ENCODE measurements at regions of chr7 and their contacts with region 1.

Region 1: GRCh38 chr7:24979863-24980533 is at the start of gene OSBPL3:
- DNase-seq: peak; percentile 97
- H3K4me3 ChIP-seq: peak within 1 kb of the TSS; percentile 95
- H3K27ac ChIP-seq: peak within 1 kb of the TSS; percentile 94
- H3K4me1 ChIP-seq: peaks cover 41% of the 10 kb centered on the region
- H3K27me3 ChIP-seq: no peaks in the 10 kb centered on the region
- total RNA-seq, gene OSBPL3: 25.8 and 28.2 TPM in 2 replicates

Region 2: DNA sequence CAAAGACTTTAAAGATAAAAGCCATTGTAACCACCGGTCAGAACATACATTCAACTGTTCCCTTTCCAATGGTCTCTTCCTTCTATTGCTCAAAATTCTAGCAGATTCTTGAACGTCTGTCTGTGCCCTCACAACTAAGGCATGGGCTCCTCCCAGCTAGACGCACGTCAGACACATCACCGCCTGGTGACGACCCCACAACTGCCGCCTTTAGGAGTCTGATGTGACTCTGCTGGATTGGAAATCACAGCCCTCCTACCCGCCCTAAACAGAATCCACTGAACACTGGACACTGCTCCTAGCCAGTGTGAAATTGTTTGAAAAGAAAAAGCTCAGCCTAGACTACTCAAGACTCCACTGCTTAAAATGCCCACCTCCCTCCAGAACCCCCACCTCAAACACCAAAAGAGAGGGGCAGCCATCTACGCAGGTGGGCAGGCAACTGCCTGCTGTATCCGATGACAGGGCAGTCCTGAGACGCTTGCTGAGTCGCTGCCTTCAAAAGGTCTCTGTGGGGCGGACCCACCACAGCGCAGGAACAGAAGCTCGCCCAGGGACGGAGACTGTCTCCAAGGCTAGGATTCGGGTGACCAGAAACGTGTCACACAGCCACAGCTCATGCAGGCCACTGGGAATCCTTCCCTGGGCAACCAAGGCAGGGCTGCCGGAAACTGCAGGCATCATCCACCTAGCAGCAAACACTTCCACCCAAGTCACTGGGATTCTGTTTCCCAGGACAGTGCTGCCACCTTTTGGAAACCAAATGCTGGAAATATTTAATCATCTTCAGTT is 257.4 kb before region 1 on chr7:
- in situ Hi-C with region 1: no loop called
- DNase-seq: peak; percentile 49
- H3K4me3 ChIP-seq: no peak overlapping the region
- H3K27ac ChIP-seq: no peak overlapping the region
- H3K4me1 ChIP-seq: peaks cover 4% of the 10 kb centered on the region; the same call in 1 of the 2 replicates
- H3K27me3 ChIP-seq: no peaks in the 10 kb centered on the region

Region 3: DNA sequence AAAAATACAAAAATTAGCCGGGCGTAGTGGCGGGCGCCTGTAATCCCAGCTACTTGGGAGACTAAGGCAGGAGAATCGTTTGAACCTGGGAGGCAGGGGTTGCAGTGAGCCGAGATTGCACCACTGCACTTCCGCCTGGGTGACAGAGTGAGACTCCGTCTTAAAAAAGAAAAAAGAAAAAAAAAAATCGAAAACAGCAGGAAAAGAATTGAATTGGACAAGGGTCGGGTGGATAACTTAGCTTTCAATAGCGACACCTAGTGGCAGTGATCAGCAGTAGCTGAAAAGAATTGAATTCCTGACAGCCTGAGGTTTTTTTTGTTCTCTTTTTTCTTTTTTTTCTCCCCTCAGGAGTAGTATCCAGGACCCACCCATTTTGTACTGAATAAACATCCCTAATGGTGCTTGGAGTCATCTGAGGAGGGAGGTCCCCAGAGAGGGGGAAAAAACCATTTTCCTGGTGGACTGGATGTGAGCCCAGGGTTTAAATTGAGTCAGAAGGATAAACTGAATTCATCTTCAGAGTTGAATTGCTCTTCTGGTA is 90.0 kb after region 1 on chr7:
- in situ Hi-C with region 1: loop called (anchors 10 kb)
- DNase-seq: peak; percentile 89
- H3K4me3 ChIP-seq: no peak overlapping the region
- H3K27ac ChIP-seq: no peak overlapping the region
- H3K4me1 ChIP-seq: peaks cover 22% of the 10 kb centered on the region
- H3K27me3 ChIP-seq: no peaks in the 10 kb centered on the region

Region 4: GRCh38 chr7:25460433-25460832 is 480.4 kb after region 1 on chr7:
- in situ Hi-C with region 1: no loop called
- DNase-seq: no peak
- H3K4me3 ChIP-seq: no peak overlapping the region
- H3K27ac ChIP-seq: no peak overlapping the region
- H3K4me1 ChIP-seq: no peaks in the 10 kb centered on the region
- H3K27me3 ChIP-seq: no peaks in the 10 kb centered on the region

Measured in GM23248 (cell line).